ENCODE measurements at regions of chr22 and their contacts with region 1.

Region 1: GRCh38 chr22:30169002-30169401 is 77.6 kb downstream of the LIF start:
- DNase-seq: no peak
- H3K4me3 Mint-ChIP-seq: no peak overlapping the region
- H3K27ac Mint-ChIP-seq: no peak overlapping the region
- H3K4me1 Mint-ChIP-seq: peaks cover 23% of the 10 kb centered on the region
- H3K27me3 Mint-ChIP-seq: no peaks in the 10 kb centered on the region

Region 2: GRCh38 chr22:30183861-30184278 is 14.9 kb after region 1 on chr22:
- intact Hi-C with region 1: loop called (anchors 2 kb)
- DNase-seq: peak; percentile 37
- H3K4me3 Mint-ChIP-seq: peak overlapping the region; percentile 58
- H3K27ac Mint-ChIP-seq: peak overlapping the region; percentile 98
- H3K4me1 Mint-ChIP-seq: peaks cover 84% of the 10 kb centered on the region
- H3K27me3 Mint-ChIP-seq: no peaks in the 10 kb centered on the region

Measured in activated T-helper 2 cell treated with anti-CD3 and anti-CD28 coated beads, Interferon-gamma antibody, Interleukin-2, Interleukin-4, amounts not matched to agents 10 μg/mL and 5 μg/mL and 100 μg/mL, durations not matched to agents 14 hours and 24 hours and 36 hours (primary cell).